CD8-positive, alpha-beta memory T cell (primary cell): ENCODE measurements at regions of chr17 and their contacts with region 1.

Region 1: GRCh38 chr17:47698749-47699535 is 5.0 kb downstream of the TBKBP1 start:
- DNase-seq: peak; percentile 63 to 85 (median 72)
- H3K4me3 ChIP-seq: no peak overlapping the region
- H3K4me3 Mint-ChIP-seq: peak overlapping the region in 4 of 7 donors; percentile 22 to 84 (median 32)
- H3K27ac ChIP-seq: no peak overlapping the region
- H3K27ac Mint-ChIP-seq: peak overlapping the region in 7 of 8 donors; percentile 1 to 89 (median 63)
- H3K4me1 ChIP-seq: peaks cover 59% of the 10 kb centered on the region
- H3K4me1 Mint-ChIP-seq: peaks cover 58 to 74% (median 59%) of the 10 kb centered on the region in 3 donors
- H3K27me3 ChIP-seq: no peaks in the 10 kb centered on the region
- H3K27me3 Mint-ChIP-seq: peaks cover 0 to 2% of the 10 kb centered on the region in 2 donors

Region 2: DNA sequence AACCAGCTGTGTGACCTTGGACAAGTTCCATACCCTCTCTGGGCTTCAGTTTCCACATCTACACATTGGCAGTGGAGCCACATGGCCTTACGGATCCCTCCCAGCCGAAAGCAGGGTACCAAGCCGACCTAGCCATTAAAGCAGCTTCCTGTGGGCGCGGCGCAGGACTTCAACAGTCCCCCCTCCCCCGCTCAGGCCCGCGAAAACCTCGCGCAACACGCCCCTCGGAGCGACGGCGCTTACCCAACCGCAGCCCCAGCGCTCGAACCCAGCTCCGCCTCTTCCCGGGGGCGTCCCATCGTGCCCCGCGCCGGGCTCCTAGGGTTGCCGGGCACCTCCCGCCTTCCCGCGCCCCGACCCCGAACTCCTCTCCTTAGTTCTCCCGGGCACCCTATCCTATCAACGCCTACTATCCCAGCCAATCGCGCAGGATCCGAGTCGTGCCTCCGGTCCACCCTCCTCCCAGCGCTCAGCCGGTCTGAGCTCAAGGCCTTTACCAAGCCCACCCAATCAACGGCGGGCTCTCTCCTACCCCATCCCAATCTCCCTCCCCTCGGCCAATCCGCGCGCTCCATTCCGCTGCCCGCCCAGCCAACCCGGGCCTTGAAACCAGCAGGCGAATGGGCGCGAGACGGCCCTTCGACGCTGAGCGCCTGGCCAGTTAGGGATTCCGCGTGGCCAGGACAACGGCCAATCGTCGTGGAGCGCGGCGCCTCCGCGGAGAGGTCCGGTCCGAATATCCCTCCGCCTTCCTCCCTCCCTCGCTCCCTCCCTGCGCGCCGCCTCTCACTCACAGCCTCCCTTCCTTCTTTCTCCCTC is 49.6 kb before region 1 on chr17 and contains the start of gene KPNB1:
- CTCF ChIA-PET with region 1: interaction called, 7 read pairs
- POLR2A ChIA-PET with region 1: interaction called, 11 read pairs
- DNase-seq: peak; percentile 98 to 99 (median 98)
- H3K4me3 ChIP-seq: peak within 1 kb of the TSS; percentile 84
- H3K4me3 Mint-ChIP-seq: peak within 1 kb of the TSS; percentile 91 to 100 (median 98)
- H3K27ac ChIP-seq: peak within 1 kb of the TSS; percentile 85
- H3K27ac Mint-ChIP-seq: peak within 1 kb of the TSS; percentile 92 to 100 (median 98)
- H3K4me1 ChIP-seq: peaks cover 49% of the 10 kb centered on the region
- H3K4me1 Mint-ChIP-seq: peaks cover 39 to 65% (median 53%) of the 10 kb centered on the region in 3 donors
- H3K27me3 ChIP-seq: no peaks in the 10 kb centered on the region
- H3K27me3 Mint-ChIP-seq: peaks cover 0 to 5% of the 10 kb centered on the region in 2 donors
- total RNA-seq, gene KPNB1: 907 to 915 TPM

Region 3: DNA sequence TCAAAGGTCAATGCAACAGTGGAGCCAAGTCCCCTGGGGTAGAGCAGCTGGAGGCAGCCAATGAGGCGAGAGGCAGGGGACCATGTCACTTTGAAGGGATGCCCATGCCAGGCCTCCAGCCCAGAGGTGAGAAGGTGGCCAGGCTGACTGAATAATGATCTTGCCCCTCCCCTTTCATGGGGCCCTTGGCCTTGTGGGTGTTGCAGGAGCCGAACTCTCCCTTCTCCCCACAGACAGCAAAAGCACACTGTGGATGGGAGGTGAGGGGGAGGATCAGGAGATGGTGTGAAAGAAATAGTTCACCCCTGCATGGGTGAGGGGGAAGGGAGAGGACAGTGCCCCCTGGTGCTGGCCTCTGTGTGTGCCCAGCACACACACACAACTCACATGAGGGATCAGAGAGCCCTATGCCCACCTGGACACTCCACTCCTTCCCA is 18.3 kb after region 1 on chr17:
- CTCF ChIA-PET with region 1: interaction called, 84 read pairs
- POLR2A ChIA-PET with region 1: interaction called, 7 read pairs
- DNase-seq: no peak
- H3K4me3 ChIP-seq: no peak overlapping the region
- H3K4me3 Mint-ChIP-seq: peak overlapping the region in 5 of 7 donors; percentile 57 to 78 (median 77)
- H3K27ac ChIP-seq: no peak overlapping the region
- H3K27ac Mint-ChIP-seq: peak overlapping the region in 7 of 8 donors; percentile 17 to 91 (median 54)
- H3K4me1 ChIP-seq: peaks cover 96% of the 10 kb centered on the region
- H3K4me1 Mint-ChIP-seq: peaks cover 93 to 97% (median 95%) of the 10 kb centered on the region in 3 donors
- H3K27me3 ChIP-seq: peaks cover 3% of the 10 kb centered on the region
- H3K27me3 Mint-ChIP-seq: no peaks in the 10 kb centered on the region

Region 4: DNA sequence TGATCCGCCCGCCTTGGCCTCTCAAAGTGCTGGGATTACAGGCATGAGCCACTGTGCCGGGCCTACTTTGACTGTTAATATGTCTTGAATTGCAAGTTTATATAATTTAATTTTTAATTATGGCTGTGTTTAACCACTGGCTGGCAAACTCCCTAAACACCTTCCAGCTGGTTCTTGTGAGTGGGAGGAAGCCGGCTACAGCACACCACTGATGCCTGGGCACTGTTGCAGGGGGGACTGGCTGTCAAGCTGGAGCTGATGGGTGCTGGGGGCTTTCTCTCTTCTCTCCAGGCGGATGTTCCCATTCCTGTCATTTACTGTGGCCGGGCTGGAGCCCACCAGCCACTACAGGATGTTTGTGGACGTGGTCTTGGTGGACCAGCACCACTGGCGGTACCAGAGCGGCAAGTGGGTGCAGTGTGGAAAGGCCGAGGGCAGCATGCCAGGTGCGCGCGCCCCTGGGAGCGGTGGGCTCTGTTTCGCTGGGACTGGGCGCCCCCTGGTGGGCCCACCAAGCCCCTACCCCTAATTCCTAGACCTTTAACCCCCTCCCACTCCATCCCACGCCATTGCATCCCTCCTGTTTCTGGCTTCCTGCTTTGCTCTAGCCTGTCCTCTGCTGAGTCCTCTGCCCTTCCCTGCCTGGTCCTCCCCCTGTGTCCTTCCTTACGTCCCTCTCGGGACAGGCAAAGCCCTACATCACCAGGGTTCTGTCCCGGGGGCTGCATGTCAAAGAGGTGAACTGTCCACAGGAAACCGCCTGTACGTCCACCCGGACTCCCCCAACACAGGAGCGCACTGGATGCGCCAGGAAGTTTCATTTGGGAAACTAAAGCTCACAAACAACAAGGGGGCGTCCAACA is 43.6 kb after region 1 on chr17:
- CTCF ChIA-PET with region 1: interaction called, 77 read pairs
- POLR2A ChIA-PET with region 1: no interaction called
- DNase-seq: peak in 4 of 5 donors; percentile 43 to 69 (median 44)
- H3K4me3 ChIP-seq: no peak overlapping the region
- H3K4me3 Mint-ChIP-seq: peak overlapping the region; percentile 56 to 88 (median 74)
- H3K27ac ChIP-seq: no peak overlapping the region
- H3K27ac Mint-ChIP-seq: peak overlapping the region; percentile 43 to 96 (median 92)
- H3K4me1 ChIP-seq: peaks cover 22% of the 10 kb centered on the region
- H3K4me1 Mint-ChIP-seq: peaks cover 36 to 49% (median 43%) of the 10 kb centered on the region in 3 donors
- H3K27me3 ChIP-seq: no peaks in the 10 kb centered on the region
- H3K27me3 Mint-ChIP-seq: peaks cover 0 to 3% of the 10 kb centered on the region in 2 donors

Region 5: DNA sequence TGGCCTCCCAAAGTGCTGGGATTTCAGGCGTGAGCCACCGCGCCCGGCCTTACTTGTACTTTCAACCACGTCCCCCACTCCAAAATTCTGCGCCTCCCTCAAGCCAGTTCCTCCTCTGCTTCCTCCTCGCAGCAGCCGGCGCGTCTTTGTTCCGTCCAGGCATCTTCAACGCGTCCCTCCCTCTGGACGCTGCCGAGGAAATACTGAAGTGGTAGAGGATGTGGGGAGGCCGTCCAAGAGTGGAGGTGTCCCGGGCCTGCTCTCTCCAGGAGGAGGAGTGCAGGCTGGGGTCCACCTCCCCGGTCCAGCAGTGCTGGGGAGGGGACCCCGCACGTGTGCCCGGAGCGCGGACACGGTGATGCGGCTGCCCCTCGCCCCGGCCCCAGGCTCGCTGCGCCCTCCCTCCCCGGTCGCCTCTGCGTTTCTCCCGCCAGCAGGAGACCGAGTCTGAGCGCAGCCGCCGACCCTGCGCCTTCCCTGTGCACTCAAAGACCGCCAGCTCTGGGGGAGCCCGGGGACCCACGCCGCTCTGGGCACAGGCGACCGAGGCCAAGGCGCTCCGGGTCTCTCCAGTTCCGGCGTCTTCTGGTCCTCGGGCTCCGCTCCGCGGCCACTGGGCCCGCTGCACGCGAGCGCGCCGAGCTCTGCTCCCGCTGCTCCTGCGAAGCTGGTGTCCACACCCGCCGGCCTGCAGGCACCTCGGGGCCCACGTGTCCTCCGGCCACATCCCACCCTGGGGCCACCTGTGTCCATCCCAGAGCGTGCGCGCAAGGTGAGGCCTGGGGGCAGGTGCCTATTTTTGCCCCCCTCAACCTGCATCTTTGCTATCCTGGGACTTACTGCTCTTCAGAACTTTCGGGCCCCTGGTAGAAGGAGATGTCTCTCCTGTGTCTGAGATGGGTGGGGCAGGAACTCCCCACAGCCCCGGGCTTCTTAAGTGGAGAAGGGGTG is 90.9 kb after region 1 on chr17:
- CTCF ChIA-PET with region 1: interaction called, 10 read pairs
- POLR2A ChIA-PET with region 1: no interaction called
- DNase-seq: peak; percentile 25 to 71 (median 43)
- H3K4me3 ChIP-seq: peak overlapping the region; percentile 41
- H3K4me3 Mint-ChIP-seq: peak overlapping the region; percentile 49 to 89 (median 78)
- H3K27ac ChIP-seq: no peak overlapping the region
- H3K27ac Mint-ChIP-seq: no peak overlapping the region
- H3K4me1 ChIP-seq: peaks cover 5% of the 10 kb centered on the region
- H3K4me1 Mint-ChIP-seq: peaks cover 9 to 16% (median 15%) of the 10 kb centered on the region in 3 donors
- H3K27me3 ChIP-seq: peaks cover 18% of the 10 kb centered on the region
- H3K27me3 Mint-ChIP-seq: peaks cover 43 to 60% of the 10 kb centered on the region in 2 donors

Region 6: GRCh38 chr17:47862621-47863440 is 163.9 kb after region 1 on chr17:
- CTCF ChIA-PET with region 1: no interaction called
- POLR2A ChIA-PET with region 1: no interaction called
- DNase-seq: no peak
- H3K4me3 ChIP-seq: no peak overlapping the region
- H3K4me3 Mint-ChIP-seq: no peak overlapping the region
- H3K27ac ChIP-seq: no peak overlapping the region
- H3K27ac Mint-ChIP-seq: no peak overlapping the region
- H3K4me1 ChIP-seq: peaks cover 17% of the 10 kb centered on the region
- H3K4me1 Mint-ChIP-seq: peaks cover 0 to 3% (median 0%) of the 10 kb centered on the region in 3 donors
- H3K27me3 ChIP-seq: no peaks in the 10 kb centered on the region
- H3K27me3 Mint-ChIP-seq: peaks cover 11 to 33% of the 10 kb centered on the region in 2 donors

Region 7: GRCh38 chr17:47941236-47941994 is 242.5 kb after region 1 on chr17 and contains the start of gene PNPO:
- CTCF ChIA-PET with region 1: no interaction called
- POLR2A ChIA-PET with region 1: no interaction called
- DNase-seq: peak; percentile 88 to 96 (median 93)
- H3K4me3 ChIP-seq: peak within 1 kb of the TSS; percentile 88
- H3K4me3 Mint-ChIP-seq: peak within 1 kb of the TSS; percentile 59 to 91 (median 86)
- H3K27ac ChIP-seq: peak within 1 kb of the TSS; percentile 81
- H3K27ac Mint-ChIP-seq: peak within 1 kb of the TSS; percentile 53 to 96 (median 92)
- H3K4me1 ChIP-seq: peaks cover 43% of the 10 kb centered on the region
- H3K4me1 Mint-ChIP-seq: peaks cover 33 to 57% (median 49%) of the 10 kb centered on the region in 3 donors
- H3K27me3 ChIP-seq: no peaks in the 10 kb centered on the region
- H3K27me3 Mint-ChIP-seq: no peaks in the 10 kb centered on the region
- total RNA-seq, gene PNPO: 55.5 to 57.7 TPM